ENCODE measurements at regions of chr13 and their contacts with region 1.

Region 1: DNA sequence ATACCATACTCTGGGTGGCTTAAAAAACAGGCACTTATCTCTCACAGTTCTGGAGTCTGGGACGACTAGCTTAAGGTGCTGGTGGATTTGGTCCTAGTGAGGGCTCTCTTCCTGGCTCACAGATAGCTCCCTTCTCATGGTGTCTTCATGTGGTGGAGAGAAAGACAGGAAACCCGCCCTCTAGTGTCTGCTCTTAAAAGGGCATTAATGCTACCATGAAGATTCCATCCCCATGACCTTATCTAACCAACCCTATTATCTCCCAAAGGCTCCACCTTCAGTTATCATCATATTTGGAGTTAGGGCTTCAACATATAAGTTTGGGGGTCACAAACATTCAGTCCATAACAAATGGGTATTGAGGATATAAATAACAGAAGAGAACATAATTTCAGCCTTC is 139.4 kb downstream of the HS6ST3 start:
- DNase-seq: no peak
- ATAC-seq: peak; percentile 96
- H3K4me3 Mint-ChIP-seq: no peak overlapping the region
- H3K27ac Mint-ChIP-seq: no peak overlapping the region
- H3K4me1 Mint-ChIP-seq: no peaks in the 10 kb centered on the region
- H3K27me3 Mint-ChIP-seq: no peaks in the 10 kb centered on the region
- CTCF ChIP-seq: peak; percentile 61

Region 2: GRCh38 chr13:96020155-96020575 is 209.2 kb before region 1 on chr13:
- CTCF ChIA-PET with region 1: interaction called, 28 read pairs
- POLR2A ChIA-PET with region 1: no interaction called
- DNase-seq: no peak
- ATAC-seq: peak; percentile 93
- H3K4me3 Mint-ChIP-seq: no peak overlapping the region
- H3K27ac Mint-ChIP-seq: peak overlapping the region; percentile 80; the same call in 1 of the 2 replicates
- H3K4me1 Mint-ChIP-seq: peaks cover 12% of the 10 kb centered on the region
- H3K27me3 Mint-ChIP-seq: no peaks in the 10 kb centered on the region
- CTCF ChIP-seq: peak; percentile 37; the same call in 1 of the 2 replicates

Region 3: GRCh38 chr13:96172066-96172465 is 57.3 kb before region 1 on chr13:
- CTCF ChIA-PET with region 1: no interaction called
- POLR2A ChIA-PET with region 1: no interaction called
- DNase-seq: no peak
- ATAC-seq: no peak
- H3K4me3 Mint-ChIP-seq: no peak overlapping the region
- H3K27ac Mint-ChIP-seq: no peak overlapping the region
- H3K4me1 Mint-ChIP-seq: no peaks in the 10 kb centered on the region
- H3K27me3 Mint-ChIP-seq: no peaks in the 10 kb centered on the region
- CTCF ChIP-seq: no peak

Measured in WTC11 (cell line).